Lower leg skin (tissue), 4 donors: ENCODE measurements at regions of chr21 and their contacts with region 1.

Region 1: DNA sequence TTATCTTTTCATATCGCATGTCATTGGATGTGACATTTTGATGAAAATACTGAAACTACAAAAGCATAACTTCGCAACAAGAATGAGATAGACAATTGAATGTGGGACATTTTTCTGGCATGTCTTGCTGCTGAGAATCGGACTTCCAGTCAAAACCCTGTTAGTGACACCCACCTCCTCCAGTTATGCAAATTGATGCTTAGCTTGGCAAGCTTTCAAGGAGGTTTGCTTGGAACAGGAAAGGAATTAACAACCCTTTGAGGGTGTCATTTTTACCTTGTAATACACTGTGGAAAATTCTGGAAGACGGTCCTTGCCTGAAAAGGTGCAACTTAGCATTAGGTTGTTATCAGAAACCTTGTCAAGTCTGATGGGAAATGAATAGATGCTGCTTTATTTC is 38.8 kb upstream of the FAM3B start:
- DNase-seq: no peak
- H3K4me3 ChIP-seq: no peak overlapping the region
- CTCF ChIP-seq: no peak
- POLR2A ChIP-seq: no peak

Region 2: GRCh38 chr21:41816220-41817165 is 538.6 kb after region 1 on chr21:
- intact Hi-C with region 1: loop called (anchors 10 kb)
- DNase-seq: peak; percentile 34 to 92
- H3K4me3 ChIP-seq: no peak overlapping the region
- CTCF ChIP-seq: peak in 1 of 3 donors; percentile 61
- POLR2A ChIP-seq: no peak